ENCODE measurements at regions of chr17 and their contacts with region 1.

Region 1: GRCh38 chr17:28889996-28890395 is 7.5 kb downstream of the FLOT2 start:
- DNase-seq: no peak
- ATAC-seq: no peak
- H3K4me3 ChIP-seq: no peak overlapping the region
- H3K27ac ChIP-seq: no peak overlapping the region
- H3K4me1 ChIP-seq: no peaks in the 10 kb centered on the region
- CTCF ChIP-seq: no peak
- EP300 ChIP-seq: no peak
- POLR2A ChIP-seq: no peak
- RAD21 ChIP-seq: no peak

Region 2: DNA sequence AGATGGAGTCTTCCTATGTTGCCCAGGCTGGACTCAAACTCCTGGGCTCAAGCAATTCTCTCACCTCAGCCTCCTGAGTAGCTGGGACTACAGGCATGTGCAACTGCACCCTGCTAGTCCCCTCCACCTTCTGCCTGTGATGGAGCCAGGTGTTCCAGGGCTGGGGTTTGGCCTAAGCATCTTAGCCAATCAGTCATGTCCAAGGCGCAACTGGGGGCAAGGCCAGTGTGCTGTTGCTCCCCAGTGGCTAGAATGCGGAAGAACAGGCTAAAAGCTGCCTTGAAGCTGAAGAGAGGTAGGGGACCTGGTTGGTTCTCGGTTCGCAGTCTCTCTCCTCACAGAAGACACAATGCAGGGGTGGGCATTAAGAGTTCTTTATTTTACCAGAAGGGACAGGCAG is 11.0 kb before region 1 on chr17:
- CTCF ChIA-PET with region 1: interaction called, 20 read pairs
- POLR2A ChIA-PET with region 1: interaction called, 5 read pairs
- DNase-seq: peak; percentile 81 to 90
- ATAC-seq: peak; percentile 77 to 96
- H3K4me3 ChIP-seq: no peak overlapping the region
- H3K27ac ChIP-seq: no peak overlapping the region
- H3K4me1 ChIP-seq: no peaks in the 10 kb centered on the region
- CTCF ChIP-seq: peak; percentile 48
- EP300 ChIP-seq: no peak
- POLR2A ChIP-seq: no peak
- RAD21 ChIP-seq: peak; percentile 67 to 88

Region 3: DNA sequence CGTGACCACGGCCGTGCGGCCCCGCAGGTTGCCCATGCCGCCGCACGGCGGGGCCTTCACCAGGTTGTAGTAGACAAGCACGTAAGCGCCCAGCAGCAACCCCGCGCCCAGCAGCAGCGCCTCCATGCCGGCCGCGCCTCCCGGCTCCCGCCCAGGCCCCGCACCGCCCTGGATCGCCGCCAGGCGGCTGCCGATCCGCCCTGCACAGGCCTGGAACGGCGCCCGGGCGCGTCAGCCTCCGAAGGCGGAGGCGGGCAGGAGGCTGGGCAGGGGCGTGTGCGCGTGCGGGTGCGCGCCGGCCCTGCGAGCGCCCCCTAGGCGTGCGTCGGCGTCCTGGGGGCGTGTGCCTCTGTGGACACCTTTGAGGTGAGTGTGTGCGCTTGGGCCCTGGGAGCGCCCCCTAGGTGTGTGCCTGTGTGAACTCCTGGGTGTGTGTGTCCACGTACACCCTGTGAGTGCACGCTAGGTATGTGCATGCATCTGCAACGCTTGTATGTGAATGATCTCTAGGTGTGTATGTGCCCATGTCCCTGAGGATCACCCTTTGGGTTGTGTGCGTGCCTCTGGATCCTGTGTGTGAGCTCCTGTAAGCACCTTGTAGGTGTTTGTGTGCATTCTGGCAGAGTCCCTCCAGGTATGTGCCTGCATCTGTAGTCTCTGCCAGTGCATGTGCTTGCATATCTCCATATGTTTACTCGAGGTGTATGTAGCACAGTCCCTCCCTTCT is 13.0 kb after region 1 on chr17 and contains the start of gene DHRS13:
- CTCF ChIA-PET with region 1: interaction called, 685 read pairs
- POLR2A ChIA-PET with region 1: no interaction called
- DNase-seq: peak; percentile 97
- ATAC-seq: peak; percentile 91 to 94
- H3K4me3 ChIP-seq: peak within 1 kb of the TSS; percentile 87
- H3K27ac ChIP-seq: peak within 1 kb of the TSS; percentile 76 to 84
- H3K4me1 ChIP-seq: peaks cover 10% of the 10 kb centered on the region
- CTCF ChIP-seq: peak; percentile 100
- EP300 ChIP-seq: no peak
- POLR2A ChIP-seq: no peak
- RAD21 ChIP-seq: peak; percentile 63 to 70
- polyA plus RNA-seq, gene DHRS13: 7.0 and 7.3 TPM in 2 replicates

Measured in A549 (cell line).